ENCODE measurements at regions of chr21 and their contacts with region 1.

Region 1: GRCh38 chr21:29298348-29299045 is at the start of gene BACH1:
- DNase-seq: no peak
- ATAC-seq: peak; percentile 61
- H3K4me3 ChIP-seq: peak within 1 kb of the TSS; percentile 93
- H3K27ac ChIP-seq: peak within 1 kb of the TSS; percentile 96
- H3K4me1 ChIP-seq: peaks cover 31% of the 10 kb centered on the region
- H3K27me3 ChIP-seq: no peaks in the 10 kb centered on the region
- CTCF ChIP-seq: peak; percentile 32 to 59 (median 41); a peak in 5 of 6 replicates
- EP300 ChIP-seq: no peak
- POLR2A ChIP-seq: peak; percentile 98
- RAD21 ChIP-seq: peak; percentile 59
- polyA plus RNA-seq, gene BACH1: 3.2 to 3.3 TPM

Region 2: GRCh38 chr21:29073222-29074006 is 225.1 kb before region 1 on chr21 and contains the start of gene CCT8:
- CTCF ChIA-PET with region 1: interaction called, 19 read pairs
- POLR2A ChIA-PET with region 1: interaction called, 68 read pairs
- RAD21 ChIA-PET with region 1: interaction called, 64 read pairs
- SMC1A ChIA-PET with region 1: interaction called, 17 read pairs
- in situ Hi-C with region 1: no loop called
- intact Hi-C with region 1: loop called (anchors 2 kb)
- DNase-seq: peak; percentile 98
- ATAC-seq: peak; percentile 87
- H3K4me3 ChIP-seq: peak within 1 kb of the TSS; percentile 91
- H3K27ac ChIP-seq: peak within 1 kb of the TSS; percentile 98
- H3K4me1 ChIP-seq: no peaks in the 10 kb centered on the region
- H3K27me3 ChIP-seq: no peaks in the 10 kb centered on the region
- CTCF ChIP-seq: no peak
- EP300 ChIP-seq: peak in 1 of 2 experiments; percentile 49; a peak in 1 of 4 replicates
- POLR2A ChIP-seq: peak; percentile 100
- RAD21 ChIP-seq: no peak
- polyA plus RNA-seq, gene CCT8: 510 to 696 TPM

Region 3: GRCh38 chr21:29114765-29115164 is 183.7 kb before region 1 on chr21:
- CTCF ChIA-PET with region 1: no interaction called
- POLR2A ChIA-PET with region 1: no interaction called
- RAD21 ChIA-PET with region 1: interaction called, 16 read pairs
- SMC1A ChIA-PET with region 1: interaction called, 10 read pairs
- in situ Hi-C with region 1: no loop called
- intact Hi-C with region 1: no loop called
- DNase-seq: no peak
- ATAC-seq: no peak
- H3K4me3 ChIP-seq: no peak overlapping the region
- H3K27ac ChIP-seq: no peak overlapping the region
- H3K4me1 ChIP-seq: peaks cover 10% of the 10 kb centered on the region
- H3K27me3 ChIP-seq: no peaks in the 10 kb centered on the region
- CTCF ChIP-seq: no peak
- EP300 ChIP-seq: no peak
- POLR2A ChIP-seq: no peak
- RAD21 ChIP-seq: no peak

Region 4: GRCh38 chr21:29208682-29209059 is 89.8 kb before region 1 on chr21:
- CTCF ChIA-PET with region 1: no interaction called
- POLR2A ChIA-PET with region 1: interaction called, 4 read pairs
- RAD21 ChIA-PET with region 1: interaction called, 10 read pairs
- SMC1A ChIA-PET with region 1: interaction called, 6 read pairs
- in situ Hi-C with region 1: no loop called
- intact Hi-C with region 1: no loop called
- DNase-seq: no peak
- ATAC-seq: peak; percentile 57
- H3K4me3 ChIP-seq: no peak overlapping the region
- H3K27ac ChIP-seq: peak overlapping the region; percentile 31; the same call in 1 of the 2 replicates
- H3K4me1 ChIP-seq: peaks cover 10% of the 10 kb centered on the region
- H3K27me3 ChIP-seq: no peaks in the 10 kb centered on the region
- CTCF ChIP-seq: no peak
- EP300 ChIP-seq: peak; percentile 38 to 40; a peak in 1 of 4 replicates
- POLR2A ChIP-seq: no peak
- RAD21 ChIP-seq: no peak

Region 5: DNA sequence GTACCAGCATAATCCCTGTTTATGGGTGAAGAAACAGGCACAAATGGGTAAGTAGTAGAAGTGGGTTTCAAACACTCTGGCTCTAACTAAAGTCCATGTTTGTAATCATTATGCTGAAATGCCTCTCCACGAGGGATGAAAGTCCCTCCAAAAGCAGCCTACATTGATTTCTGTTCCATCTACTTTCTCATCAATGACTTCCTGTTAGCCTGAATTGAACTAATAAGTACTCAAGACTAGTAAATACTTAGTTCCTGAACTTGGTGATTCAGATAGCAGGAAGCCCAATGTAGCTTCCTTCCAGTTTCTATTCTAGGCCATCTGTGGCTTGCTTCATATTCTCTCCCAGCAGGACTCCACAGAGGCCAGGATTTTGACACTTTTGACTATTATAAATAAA is 11.1 kb before region 1 on chr21:
- CTCF ChIA-PET with region 1: interaction called, 5 read pairs
- POLR2A ChIA-PET with region 1: interaction called, 6 read pairs
- RAD21 ChIA-PET with region 1: interaction called, 4 read pairs
- SMC1A ChIA-PET with region 1: interaction called, 11 read pairs
- in situ Hi-C with region 1: no loop called
- intact Hi-C with region 1: no loop called
- DNase-seq: no peak
- ATAC-seq: peak; percentile 33
- H3K4me3 ChIP-seq: no peak overlapping the region
- H3K27ac ChIP-seq: no peak overlapping the region
- H3K4me1 ChIP-seq: no peaks in the 10 kb centered on the region
- H3K27me3 ChIP-seq: no peaks in the 10 kb centered on the region
- CTCF ChIP-seq: no peak
- EP300 ChIP-seq: no peak
- POLR2A ChIP-seq: no peak
- RAD21 ChIP-seq: no peak

Region 6: DNA sequence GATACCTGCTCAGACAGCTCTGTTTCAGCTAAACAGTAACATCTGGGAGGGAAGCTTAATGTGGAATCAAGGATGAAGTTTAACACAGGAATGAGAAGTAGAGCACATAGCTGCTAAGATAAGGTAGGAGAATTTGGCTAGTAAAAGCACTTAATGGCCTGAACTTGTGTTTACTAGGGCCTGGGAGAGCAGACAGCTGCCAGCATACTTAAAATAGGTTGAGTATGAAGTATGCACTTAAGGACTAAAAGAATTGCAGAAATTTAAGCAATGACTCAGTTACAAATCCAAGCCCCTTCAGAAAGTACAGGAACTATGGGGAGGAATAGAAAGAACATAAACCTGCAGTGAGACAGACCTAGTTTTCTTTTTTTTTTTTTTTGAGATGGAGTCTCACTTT is 53.2 kb after region 1 on chr21:
- CTCF ChIA-PET with region 1: interaction called, 39 read pairs
- POLR2A ChIA-PET with region 1: interaction called, 4 read pairs
- RAD21 ChIA-PET with region 1: interaction called, 18 read pairs
- SMC1A ChIA-PET with region 1: interaction called, 35 read pairs
- in situ Hi-C with region 1: no loop called
- intact Hi-C with region 1: no loop called
- DNase-seq: no peak
- ATAC-seq: no peak
- H3K4me3 ChIP-seq: no peak overlapping the region
- H3K27ac ChIP-seq: no peak overlapping the region
- H3K4me1 ChIP-seq: peaks cover 16% of the 10 kb centered on the region
- H3K27me3 ChIP-seq: no peaks in the 10 kb centered on the region
- CTCF ChIP-seq: no peak
- EP300 ChIP-seq: no peak
- POLR2A ChIP-seq: no peak
- RAD21 ChIP-seq: no peak